CD8-positive, alpha-beta T cell (primary cell): ENCODE measurements at regions of chr17 and their contacts with region 1.

Region 1: GRCh38 chr17:65013613-65014391 is 42.7 kb downstream of the GNA13 start:
- DNase-seq: peak in 6 of 9 experiments; percentile 11 to 70 (median 38)
- ATAC-seq: peak; percentile 50
- H3K4me3 ChIP-seq: no peak overlapping the region
- H3K4me3 Mint-ChIP-seq: peak overlapping the region; percentile 5
- H3K27ac ChIP-seq: peak overlapping the region in 1 of 2 experiments; percentile 30
- H3K27ac Mint-ChIP-seq: peak overlapping the region; percentile 30
- H3K4me1 ChIP-seq: peaks cover 18% of the 10 kb centered on the region
- H3K4me1 Mint-ChIP-seq: peaks cover 76% of the 10 kb centered on the region
- H3K27me3 ChIP-seq: no peaks in the 10 kb centered on the region
- H3K27me3 Mint-ChIP-seq: no peaks in the 10 kb centered on the region
- CTCF ChIP-seq: no peak

Region 2: DNA sequence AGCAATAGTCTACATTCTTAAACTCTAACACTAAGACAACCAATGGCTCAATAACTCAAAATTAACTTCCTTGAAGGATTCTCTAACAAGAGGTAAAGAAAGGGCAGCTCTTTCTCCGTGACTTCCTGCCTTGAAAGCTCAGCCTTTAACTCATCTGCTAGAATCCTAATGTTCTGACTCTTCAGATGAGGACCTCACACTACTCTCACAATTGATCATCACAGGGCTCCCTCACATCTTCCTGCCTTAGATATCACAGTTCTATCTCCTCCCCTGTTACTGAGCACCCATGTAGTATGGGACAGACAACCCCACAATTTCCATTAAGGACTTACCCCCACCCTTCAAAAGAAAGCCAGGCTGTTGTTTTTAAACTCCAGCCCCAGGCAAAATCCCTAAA is 385.2 kb before region 1 on chr17:
- CTCF ChIA-PET with region 1: no interaction called
- POLR2A ChIA-PET with region 1: no interaction called
- intact Hi-C with region 1: no loop called
- DNase-seq: peak in 1 of 9 experiments; percentile 23
- ATAC-seq: peak; percentile 38
- H3K4me3 ChIP-seq: no peak overlapping the region
- H3K4me3 Mint-ChIP-seq: peak overlapping the region; percentile 20
- H3K27ac ChIP-seq: no peak overlapping the region
- H3K27ac Mint-ChIP-seq: peak overlapping the region; percentile 5
- H3K4me1 ChIP-seq: peaks cover 33% of the 10 kb centered on the region
- H3K4me1 Mint-ChIP-seq: peaks cover 65% of the 10 kb centered on the region
- H3K27me3 ChIP-seq: no peaks in the 10 kb centered on the region
- H3K27me3 Mint-ChIP-seq: no peaks in the 10 kb centered on the region
- CTCF ChIP-seq: no peak

Region 3: GRCh38 chr17:64984851-64985521 is 28.8 kb before region 1 on chr17:
- CTCF ChIA-PET with region 1: no interaction called
- POLR2A ChIA-PET with region 1: interaction called, 3 read pairs
- intact Hi-C with region 1: loop called in 1 of 2 experiments (anchors 2 kb)
- DNase-seq: peak in 8 of 9 experiments; percentile 30 to 87 (median 60)
- ATAC-seq: peak; percentile 48
- H3K4me3 ChIP-seq: peak overlapping the region; percentile 42 to 43
- H3K4me3 Mint-ChIP-seq: peak overlapping the region; percentile 76
- H3K27ac ChIP-seq: peak overlapping the region; percentile 82 to 99
- H3K27ac Mint-ChIP-seq: peak overlapping the region; percentile 99
- H3K4me1 ChIP-seq: peaks cover 34% of the 10 kb centered on the region
- H3K4me1 Mint-ChIP-seq: peaks cover 35% of the 10 kb centered on the region
- H3K27me3 ChIP-seq: no peaks in the 10 kb centered on the region
- H3K27me3 Mint-ChIP-seq: no peaks in the 10 kb centered on the region
- CTCF ChIP-seq: no peak

Region 4: DNA sequence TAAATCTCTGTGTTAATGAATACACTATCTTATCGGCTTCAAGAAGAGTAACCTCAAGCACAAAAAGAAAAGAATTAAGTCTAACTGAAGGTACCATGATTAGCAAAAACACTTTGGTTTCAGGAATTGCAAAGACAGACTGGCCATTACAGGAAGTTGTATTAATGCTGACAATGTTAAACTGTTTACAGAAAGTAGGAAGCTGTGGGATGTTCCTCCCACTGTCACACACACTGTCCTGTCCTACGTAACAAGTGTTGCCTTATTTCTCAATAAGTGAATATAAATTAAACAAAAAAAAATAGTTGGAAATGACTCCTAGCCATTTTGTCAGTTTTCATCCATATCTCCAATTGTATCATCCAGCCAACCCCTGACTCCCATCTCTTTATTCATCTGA is 34.1 kb after region 1 on chr17:
- CTCF ChIA-PET with region 1: no interaction called
- POLR2A ChIA-PET with region 1: no interaction called
- intact Hi-C with region 1: loop called in 1 of 2 experiments (anchors 5 kb)
- DNase-seq: peak in 1 of 9 experiments; percentile 50
- ATAC-seq: no peak
- H3K4me3 ChIP-seq: no peak overlapping the region
- H3K4me3 Mint-ChIP-seq: no peak overlapping the region
- H3K27ac ChIP-seq: peak overlapping the region in 1 of 2 experiments; percentile 53
- H3K27ac Mint-ChIP-seq: peak overlapping the region; percentile 68
- H3K4me1 ChIP-seq: peaks cover 41% of the 10 kb centered on the region
- H3K4me1 Mint-ChIP-seq: peaks cover 82% of the 10 kb centered on the region
- H3K27me3 ChIP-seq: no peaks in the 10 kb centered on the region
- H3K27me3 Mint-ChIP-seq: no peaks in the 10 kb centered on the region
- CTCF ChIP-seq: no peak

Region 5: DNA sequence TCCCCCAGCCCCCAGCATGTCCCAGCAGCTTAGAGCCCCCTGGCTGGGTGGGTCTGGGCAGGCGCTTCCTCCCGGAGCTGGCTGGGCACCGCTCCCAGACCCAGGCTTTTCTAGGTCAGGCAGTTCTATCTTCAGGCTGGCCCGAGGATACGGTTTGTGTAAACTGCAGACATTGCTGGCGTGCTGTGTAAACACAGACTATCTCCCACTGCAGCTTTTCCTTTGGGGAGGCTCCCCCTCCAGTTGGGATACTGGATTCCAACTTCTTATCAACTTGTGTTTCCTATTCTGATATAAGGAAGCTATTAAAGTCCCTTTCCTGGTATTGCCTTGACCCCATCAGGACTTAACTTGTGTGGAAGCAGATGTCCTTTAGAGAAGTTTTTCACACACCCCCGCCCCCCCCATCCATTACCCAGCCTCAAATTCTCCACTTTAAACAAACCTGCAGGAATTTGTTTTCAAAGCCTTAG is 61.0 kb after region 1 on chr17:
- CTCF ChIA-PET with region 1: no interaction called
- POLR2A ChIA-PET with region 1: no interaction called
- intact Hi-C with region 1: no loop called
- DNase-seq: no peak
- ATAC-seq: no peak
- H3K4me3 ChIP-seq: no peak overlapping the region
- H3K4me3 Mint-ChIP-seq: no peak overlapping the region
- H3K27ac ChIP-seq: no peak overlapping the region
- H3K27ac Mint-ChIP-seq: no peak overlapping the region
- H3K4me1 ChIP-seq: no peaks in the 10 kb centered on the region
- H3K4me1 Mint-ChIP-seq: no peaks in the 10 kb centered on the region
- H3K27me3 ChIP-seq: no peaks in the 10 kb centered on the region
- H3K27me3 Mint-ChIP-seq: no peaks in the 10 kb centered on the region
- CTCF ChIP-seq: no peak